Gastrocnemius medialis (tissue), 4 donors: ENCODE measurements at regions of chr9 and their contacts with region 1.

Region 1: GRCh38 chr9:86500667-86501435 is 146.6 kb upstream of the TUT7 start:
- DNase-seq: peak in 1 of 2 donors; percentile 22
- ATAC-seq: peak; percentile 66 to 76
- H3K4me3 ChIP-seq: no peak overlapping the region
- H3K27ac ChIP-seq: peak overlapping the region; percentile 13 to 48 (median 26)
- H3K4me1 ChIP-seq: no peaks in the 10 kb centered on the region
- H3K27me3 ChIP-seq: no peaks in the 10 kb centered on the region
- CTCF ChIP-seq: no peak
- POLR2A ChIP-seq: no peak

Region 2: GRCh38 chr9:86470326-86470725 is 30.5 kb before region 1 on chr9:
- in situ Hi-C with region 1: no loop called
- intact Hi-C with region 1: no loop called
- DNase-seq: no peak
- ATAC-seq: no peak
- H3K4me3 ChIP-seq: no peak overlapping the region
- H3K27ac ChIP-seq: no peak overlapping the region
- H3K4me1 ChIP-seq: no peaks in the 10 kb centered on the region
- H3K27me3 ChIP-seq: no peaks in the 10 kb centered on the region
- CTCF ChIP-seq: no peak
- POLR2A ChIP-seq: no peak

Region 3: DNA sequence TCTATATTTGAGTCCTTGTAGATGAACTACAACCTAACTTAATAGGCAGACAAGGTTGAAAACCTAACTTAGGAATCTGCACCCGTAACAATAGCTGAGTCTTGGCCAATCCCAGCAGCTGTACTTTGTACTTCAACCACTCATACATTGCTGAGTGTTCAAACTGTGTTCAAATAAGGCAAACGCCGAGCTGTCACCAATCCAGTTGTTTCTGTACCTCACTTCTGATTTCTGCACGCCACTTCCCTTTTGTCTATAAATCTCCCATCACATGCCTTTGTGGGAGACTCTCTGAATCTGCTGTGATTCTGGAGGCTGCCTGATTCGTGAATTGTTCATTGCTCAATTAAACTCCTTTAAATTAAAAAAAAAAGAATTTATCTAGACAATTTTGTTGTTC is 21.1 kb after region 1 on chr9:
- in situ Hi-C with region 1: no loop called
- intact Hi-C with region 1: no loop called
- DNase-seq: no peak
- ATAC-seq: no peak
- H3K4me3 ChIP-seq: no peak overlapping the region
- H3K27ac ChIP-seq: no peak overlapping the region
- H3K4me1 ChIP-seq: no peaks in the 10 kb centered on the region
- H3K27me3 ChIP-seq: no peaks in the 10 kb centered on the region
- CTCF ChIP-seq: no peak
- POLR2A ChIP-seq: no peak

Region 4: GRCh38 chr9:86795823-86796553 is 295.1 kb after region 1 on chr9:
- in situ Hi-C with region 1: no loop called
- intact Hi-C with region 1: loop called (anchors 10 kb)
- DNase-seq: peak; percentile 19 to 60
- ATAC-seq: peak; percentile 58 to 77
- H3K4me3 ChIP-seq: peak overlapping the region in 2 of 4 donors; percentile 29 to 35
- H3K27ac ChIP-seq: peak overlapping the region; percentile 45 to 54 (median 46)
- H3K4me1 ChIP-seq: no peaks in the 10 kb centered on the region
- H3K27me3 ChIP-seq: no peaks in the 10 kb centered on the region
- CTCF ChIP-seq: no peak
- POLR2A ChIP-seq: peak in 1 of 2 donors; percentile 20